ENCODE measurements at regions of chr19 and their contacts with region 1.

Region 1: DNA sequence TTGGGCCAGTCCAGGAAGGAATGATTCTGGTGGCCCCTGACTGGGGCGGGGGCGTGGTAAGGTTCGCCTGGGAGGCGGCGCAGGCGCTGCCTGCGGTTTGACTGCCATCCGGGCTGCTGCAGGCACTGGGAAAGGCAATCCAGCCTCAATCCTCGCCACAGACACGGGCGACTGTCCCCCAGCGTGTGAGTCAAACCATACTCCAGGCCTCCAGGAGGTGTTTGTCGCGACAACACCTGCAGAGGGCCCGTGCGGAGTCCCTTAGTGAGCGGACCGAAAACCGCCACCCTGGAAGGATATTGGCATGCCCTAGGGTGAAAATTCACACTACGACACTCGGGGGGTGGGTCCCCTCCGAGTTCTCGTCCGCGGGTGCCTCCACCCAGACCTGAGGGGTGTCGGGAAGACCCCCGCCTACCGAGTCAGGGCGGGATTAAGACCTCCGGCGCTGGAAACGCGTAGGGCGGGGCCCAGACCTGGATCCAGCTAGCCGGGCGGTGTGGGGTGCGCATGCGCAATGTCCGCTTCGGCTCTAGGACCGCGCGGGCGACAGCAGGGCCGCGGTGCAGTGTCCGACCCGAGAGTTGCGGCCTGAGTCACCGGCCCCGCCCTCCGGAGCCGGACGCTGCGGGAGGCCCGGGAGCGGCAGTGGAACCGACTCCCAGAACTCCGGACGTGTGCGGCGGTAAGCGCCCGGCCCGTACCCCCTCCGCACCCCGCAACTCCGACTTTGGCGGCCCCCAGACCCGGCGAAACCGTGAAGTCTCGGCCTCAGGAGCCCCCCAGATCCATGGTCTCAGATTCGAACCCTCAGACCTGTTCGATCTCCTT is at the start of gene CAPNS1:
- DNase-seq: peak; percentile 98
- H3K4me3 ChIP-seq: peak within 1 kb of the TSS; percentile 74 to 97 (median 76)
- H3K27ac ChIP-seq: peak within 1 kb of the TSS; percentile 92 to 100 (median 96)
- H3K4me1 ChIP-seq: peaks cover 23 to 51% (median 43%) of the 10 kb centered on the region in 4 donors
- H3K27me3 ChIP-seq: no peaks in the 10 kb centered on the region
- CTCF ChIP-seq: peak in 2 of 3 experiments; percentile 5 to 24
- EP300 ChIP-seq: no peak
- POLR2A ChIP-seq: peak; percentile 96
- total RNA-seq, gene CAPNS1: 212 to 245 (median 229) TPM

Region 2: DNA sequence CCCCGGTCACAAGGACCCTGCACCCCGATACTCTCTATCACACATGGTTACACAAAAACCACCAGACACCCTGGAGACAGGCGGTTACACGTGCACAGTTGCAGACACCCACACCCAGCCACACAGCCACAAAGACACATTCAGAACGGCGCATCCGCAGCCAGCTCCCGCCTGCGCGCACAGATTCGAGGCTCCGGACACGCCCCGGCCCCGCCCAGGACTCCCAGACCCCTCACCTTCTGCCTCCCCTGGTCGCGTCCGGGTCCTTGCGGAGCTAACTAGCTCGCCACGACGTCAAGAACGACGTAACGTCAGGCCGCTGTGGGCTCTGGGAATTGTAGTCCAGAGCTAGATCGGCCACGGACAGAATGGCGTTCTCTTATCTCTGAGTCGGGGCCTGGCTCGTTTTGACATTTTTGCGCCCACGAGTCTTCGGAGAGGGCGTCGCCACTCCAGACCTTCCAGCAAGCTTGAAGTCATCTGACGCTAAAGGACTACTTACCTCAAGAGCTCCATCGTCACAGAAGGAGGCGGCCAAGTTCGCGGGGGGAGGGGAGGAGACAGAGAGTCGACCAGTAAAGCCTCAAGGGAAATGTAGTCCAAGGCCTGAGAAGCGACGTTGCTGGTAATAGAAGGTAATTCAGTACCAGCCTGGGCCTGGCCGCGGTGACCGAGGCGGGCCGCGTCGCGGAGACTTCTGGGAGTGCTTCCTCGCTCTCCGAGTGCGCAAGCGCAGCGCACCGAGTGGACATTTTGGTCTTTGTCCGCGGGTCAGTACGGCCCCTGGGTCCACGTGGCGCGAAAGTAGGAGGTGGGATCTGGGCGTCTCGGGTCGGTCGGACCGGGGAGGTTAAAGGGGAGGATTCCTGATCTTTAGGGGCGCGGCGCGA is 74.9 kb after region 1 on chr19 and contains the starts of genes ZNF146 and ZNF565:
- intact Hi-C with region 1: loop called (anchors 10 kb)
- DNase-seq: peak; percentile 99
- H3K4me3 ChIP-seq: peak within 1 kb of the TSS; percentile 76 to 94 (median 86)
- H3K27ac ChIP-seq: peak within 1 kb of the TSS; percentile 91 to 96 (median 94)
- H3K4me1 ChIP-seq: peaks cover 18 to 57% (median 41%) of the 10 kb centered on the region in 4 donors
- H3K27me3 ChIP-seq: no peaks in the 10 kb centered on the region
- CTCF ChIP-seq: peak in 1 of 3 experiments; percentile 24
- EP300 ChIP-seq: no peak
- POLR2A ChIP-seq: peak; percentile 51
- total RNA-seq, gene ZNF146: 44.9 to 78.2 (median 49.9) TPM
- total RNA-seq, gene ZNF565: 4.6 to 5.7 (median 5.1) TPM